ENCODE measurements at regions of chr17 and their contacts with region 1.

Region 1: GRCh38 chr17:27245230-27245696 is 48.7 kb upstream of the WSB1 start:
- DNase-seq: peak; percentile 68 to 84 (median 80)
- ATAC-seq: peak; percentile 71
- H3K4me3 ChIP-seq: no peak overlapping the region
- H3K27ac ChIP-seq: peak overlapping the region; percentile 37 to 82 (median 74)
- H3K4me1 ChIP-seq: peaks cover 35% of the 10 kb centered on the region
- H3K27me3 ChIP-seq: no peaks in the 10 kb centered on the region
- CTCF ChIP-seq: peak; percentile 38 to 85 (median 61)
- POLR2A ChIP-seq: no peak

Region 2: GRCh38 chr17:27038676-27039075 is 206.6 kb before region 1 on chr17:
- intact Hi-C with region 1: no loop called
- DNase-seq: no peak
- ATAC-seq: no peak
- H3K4me3 ChIP-seq: no peak overlapping the region
- H3K27ac ChIP-seq: no peak overlapping the region
- H3K4me1 ChIP-seq: no peaks in the 10 kb centered on the region
- H3K27me3 ChIP-seq: no peaks in the 10 kb centered on the region
- CTCF ChIP-seq: no peak
- POLR2A ChIP-seq: no peak

Region 3: GRCh38 chr17:27323524-27324206 is 78.4 kb after region 1 on chr17:
- intact Hi-C with region 1: loop called (anchors 5 kb)
- DNase-seq: peak; percentile 33 to 55 (median 50)
- ATAC-seq: peak; percentile 39
- H3K4me3 ChIP-seq: no peak overlapping the region
- H3K27ac ChIP-seq: peak overlapping the region in 1 of 4 donors; percentile 39
- H3K4me1 ChIP-seq: peaks cover 19% of the 10 kb centered on the region
- H3K27me3 ChIP-seq: no peaks in the 10 kb centered on the region
- CTCF ChIP-seq: no peak
- POLR2A ChIP-seq: no peak

Region 4: DNA sequence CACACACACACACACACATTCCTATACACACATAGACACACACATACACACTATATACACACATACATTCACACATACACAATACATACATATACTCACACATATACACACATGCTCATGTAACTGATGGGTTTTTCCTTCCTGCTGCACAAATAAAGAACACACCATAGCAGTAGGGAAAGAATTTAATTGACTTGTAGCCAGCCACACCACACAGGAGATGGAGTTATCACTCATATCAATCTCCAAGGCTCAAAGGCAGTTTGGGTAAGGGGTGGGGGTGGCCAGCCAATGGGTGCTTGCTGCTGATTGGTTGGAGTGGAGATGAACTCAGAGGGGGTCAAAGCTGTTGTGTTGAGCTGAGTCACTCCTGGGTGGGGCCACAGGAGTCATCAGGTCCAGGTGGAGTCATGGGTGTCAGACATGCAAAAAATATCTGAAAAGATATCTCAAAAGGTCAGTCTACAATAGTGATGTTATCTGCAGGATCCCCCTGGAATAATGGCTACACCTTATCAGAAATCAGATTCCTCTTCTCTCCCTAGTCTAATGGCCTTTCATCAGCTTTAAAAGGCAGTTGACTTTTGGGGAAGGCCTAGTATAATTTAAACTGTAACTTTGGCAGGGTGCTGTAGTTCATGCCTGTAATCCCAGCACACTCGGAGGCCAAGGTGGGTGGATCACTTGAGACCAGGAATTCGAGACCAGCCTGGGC is 94.7 kb after region 1 on chr17:
- intact Hi-C with region 1: loop called (anchors 5 kb)
- DNase-seq: no peak
- ATAC-seq: no peak
- H3K4me3 ChIP-seq: no peak overlapping the region
- H3K27ac ChIP-seq: no peak overlapping the region
- H3K4me1 ChIP-seq: peaks cover 10% of the 10 kb centered on the region
- H3K27me3 ChIP-seq: no peaks in the 10 kb centered on the region
- CTCF ChIP-seq: no peak
- POLR2A ChIP-seq: no peak

Region 5: DNA sequence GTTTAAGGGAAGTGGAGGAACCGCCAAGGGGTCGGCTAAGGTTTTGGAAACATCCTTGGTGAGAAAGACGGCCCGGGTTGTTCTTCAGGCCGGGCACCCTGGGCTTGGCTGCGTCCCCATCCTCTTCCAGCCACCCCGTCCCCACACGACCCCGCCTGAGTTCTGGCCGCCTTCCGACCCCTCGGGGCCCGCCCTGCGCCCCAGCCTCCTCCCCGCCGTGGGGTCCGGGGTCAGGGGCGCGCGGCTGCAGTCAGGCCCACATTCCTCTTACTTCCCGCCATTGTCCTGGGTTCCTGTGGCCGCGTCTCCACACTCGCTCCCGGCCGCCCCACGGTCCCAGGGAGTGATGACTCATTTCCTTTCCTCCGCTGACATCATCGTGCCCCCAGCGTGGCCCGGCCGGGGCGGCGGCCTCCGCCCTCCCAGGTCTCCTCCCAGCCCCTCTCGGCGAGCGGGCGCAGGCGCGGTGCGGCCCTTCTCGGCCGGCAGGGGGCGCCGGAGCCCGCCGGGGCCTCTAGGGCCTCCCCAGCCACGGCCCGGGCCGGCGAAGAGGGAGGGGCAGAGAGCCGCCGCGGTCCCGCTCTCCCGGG is 108.3 kb after region 1 on chr17:
- intact Hi-C with region 1: no loop called
- DNase-seq: peak; percentile 93 to 96 (median 94)
- ATAC-seq: peak; percentile 91
- H3K4me3 ChIP-seq: peak overlapping the region; percentile 43 to 67
- H3K27ac ChIP-seq: peak overlapping the region; percentile 96 to 97 (median 96)
- H3K4me1 ChIP-seq: peaks cover 22% of the 10 kb centered on the region
- H3K27me3 ChIP-seq: no peaks in the 10 kb centered on the region
- CTCF ChIP-seq: peak; percentile 52 to 100 (median 99)
- POLR2A ChIP-seq: peak; percentile 98